ENCODE measurements at regions of chr17 and their contacts with region 1.

Region 1: DNA sequence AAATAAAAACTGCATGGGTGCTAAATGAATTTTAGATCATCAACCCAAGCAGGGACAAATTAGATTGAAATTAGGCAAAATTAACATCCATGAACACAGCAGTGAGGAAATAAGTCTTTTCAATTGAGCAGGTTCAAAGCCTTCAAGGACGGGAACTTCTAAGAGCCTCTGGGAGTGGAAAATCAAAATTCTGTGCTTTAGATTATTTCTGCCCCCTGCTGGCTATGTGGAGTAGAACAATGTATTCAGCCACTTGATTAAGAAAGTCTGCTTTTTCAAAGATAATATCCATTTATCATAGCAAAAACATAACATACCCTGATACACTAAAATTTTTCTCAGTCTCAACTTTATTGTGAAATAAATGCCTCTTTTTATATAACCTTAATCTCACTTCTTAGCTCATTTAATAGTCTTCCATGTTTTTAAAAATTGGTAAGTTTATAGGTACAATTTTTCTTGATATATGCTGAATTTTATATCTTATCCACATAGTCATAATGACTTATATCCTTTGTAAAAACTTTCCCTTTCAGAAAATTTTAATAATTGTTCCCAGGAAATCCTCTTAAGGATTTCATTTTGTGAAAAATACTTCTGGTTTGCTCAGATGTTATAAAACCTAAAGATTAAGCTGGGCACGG is 28.1 kb upstream of the NOL11 start:
- DNase-seq: peak; percentile 42
- H3K4me3 ChIP-seq: no peak overlapping the region
- H3K27ac ChIP-seq: no peak overlapping the region
- H3K4me1 ChIP-seq: no peaks in the 10 kb centered on the region
- H3K27me3 ChIP-seq: no peaks in the 10 kb centered on the region
- CTCF ChIP-seq: peak; percentile 67 to 73

Region 2: DNA sequence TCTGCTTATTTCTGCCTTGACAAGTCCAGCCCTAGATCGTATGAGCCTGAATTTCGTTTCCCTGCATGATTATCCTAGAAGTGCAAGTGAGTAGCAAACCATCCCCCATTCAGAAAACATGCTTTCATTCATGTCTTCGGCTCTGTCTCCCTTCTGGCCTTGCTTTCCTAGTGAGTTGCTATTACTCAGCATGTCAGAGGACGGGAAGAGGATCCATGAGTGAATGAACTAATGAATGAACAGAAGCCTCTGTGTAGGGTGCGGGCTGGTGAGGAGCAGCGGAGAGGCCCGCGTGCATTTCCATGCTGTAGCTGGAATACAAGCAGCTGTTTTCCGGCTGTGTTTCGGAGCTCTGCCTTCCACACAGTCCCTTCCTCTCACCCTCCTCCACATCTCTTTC is 127.7 kb before region 1 on chr17:
- CTCF ChIA-PET with region 1: interaction called, 3 read pairs
- dilution Hi-C with region 1: no loop called
- in situ Hi-C with region 1: no loop called
- intact Hi-C with region 1: loop called (anchors 5 kb)
- DNase-seq: no peak
- H3K4me3 ChIP-seq: no peak overlapping the region
- H3K27ac ChIP-seq: no peak overlapping the region
- H3K4me1 ChIP-seq: no peaks in the 10 kb centered on the region
- H3K27me3 ChIP-seq: no peaks in the 10 kb centered on the region
- CTCF ChIP-seq: no peak

Region 3: GRCh38 chr17:67637917-67638641 is 51.6 kb before region 1 on chr17:
- CTCF ChIA-PET with region 1: no interaction called
- dilution Hi-C with region 1: no loop called
- in situ Hi-C with region 1: no loop called
- intact Hi-C with region 1: loop called (anchors 2 kb)
- DNase-seq: peak; percentile 99
- H3K4me3 ChIP-seq: no peak overlapping the region
- H3K27ac ChIP-seq: peak overlapping the region; percentile 32
- H3K4me1 ChIP-seq: peaks cover 26% of the 10 kb centered on the region
- H3K27me3 ChIP-seq: no peaks in the 10 kb centered on the region
- CTCF ChIP-seq: no peak

Measured in mammary epithelial cell (primary cell).